HCT116 (cell line): ENCODE measurements at regions of chr9 and their contacts with region 1.

Region 1: DNA sequence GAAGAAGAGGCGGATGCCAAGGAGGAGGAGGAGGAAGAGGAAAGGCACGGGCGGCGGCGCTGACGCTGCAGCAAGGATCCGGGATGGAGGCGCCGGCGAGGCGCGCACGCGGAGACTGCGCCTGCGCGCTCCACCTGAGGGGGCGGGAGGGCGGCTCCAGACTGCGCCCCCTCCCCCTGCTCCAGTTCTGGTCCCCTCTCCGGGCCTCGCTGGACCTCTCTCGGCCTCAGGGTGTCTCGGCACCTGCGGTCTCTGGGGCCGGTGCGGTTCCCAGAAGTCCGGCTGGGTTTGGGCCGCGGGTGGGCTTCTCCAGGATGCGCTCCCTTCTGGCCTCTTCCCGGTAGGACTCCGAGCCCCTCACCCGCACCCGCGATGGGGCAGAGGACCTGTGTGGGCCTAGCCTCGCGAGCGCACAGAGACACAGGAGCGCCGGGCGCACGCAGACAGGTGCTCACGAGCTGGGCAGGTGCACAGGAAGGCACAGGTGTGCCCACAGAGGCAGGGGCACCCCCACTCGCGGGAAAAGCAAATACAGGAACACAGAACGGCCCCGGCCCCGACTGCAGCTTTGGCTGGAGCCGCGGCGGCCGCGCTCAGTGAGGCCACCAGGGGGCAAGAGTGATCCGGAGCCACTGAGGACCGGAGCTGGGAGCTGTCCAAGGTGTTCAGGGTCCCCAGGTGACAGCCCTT is at the start of gene NPDC1:
- DNase-seq: peak; percentile 68
- ATAC-seq: peak; percentile 73
- H3K4me3 ChIP-seq: peak within 1 kb of the TSS; percentile 55 to 90
- H3K27ac ChIP-seq: peak within 1 kb of the TSS; percentile 77
- H3K4me1 ChIP-seq: peaks cover 12 to 26% of the 10 kb centered on the region in 2 experiments
- H3K27me3 ChIP-seq: no peaks in the 10 kb centered on the region
- CTCF ChIP-seq: peak in 2 of 3 experiments; percentile 82 to 86; a peak in 4 of 6 replicates
- POLR2A ChIP-seq: no peak
- RAD21 ChIP-seq: no peak
- total RNA-seq, gene NPDC1: 98.8 TPM

Region 2: DNA sequence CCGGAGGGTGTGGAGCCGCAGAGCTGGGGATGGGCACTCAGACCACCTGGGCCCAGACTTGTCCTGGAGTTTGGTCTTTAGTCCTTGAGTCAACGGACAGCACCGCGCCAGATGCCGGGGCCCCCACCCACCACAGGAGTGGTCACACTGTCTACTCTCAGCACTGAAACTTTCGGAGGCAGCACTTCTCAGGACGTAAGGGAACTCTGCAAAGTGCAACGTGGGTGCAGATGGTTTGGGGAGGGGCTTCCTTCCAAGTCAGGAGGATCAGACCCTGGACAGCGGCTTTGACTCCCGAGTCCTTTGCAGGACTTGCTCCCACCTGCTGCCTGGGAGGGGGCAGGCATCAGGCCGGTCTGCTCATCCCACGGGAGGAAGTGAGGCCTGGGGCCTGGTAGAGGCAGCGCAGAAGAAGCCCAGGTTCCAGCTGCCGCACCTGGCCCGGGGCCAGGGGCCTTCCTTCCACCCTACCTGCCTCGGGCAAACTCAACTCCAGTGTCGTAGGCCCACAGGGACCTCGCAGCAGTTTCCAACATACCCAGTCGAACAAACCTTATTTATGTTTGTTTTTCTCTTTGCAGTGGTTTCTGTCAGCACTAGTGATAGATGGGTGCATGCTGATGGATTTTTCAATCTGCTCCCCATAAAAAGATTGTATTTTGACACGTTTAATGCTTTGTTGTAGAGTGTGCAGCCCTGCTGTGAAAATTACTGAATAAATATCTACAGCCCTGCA is 1716.5 kb before region 1 on chr9:
- CTCF ChIA-PET with region 1: no interaction called
- POLR2A ChIA-PET with region 1: no interaction called
- RAD21 ChIA-PET with region 1: no interaction called
- intact Hi-C with region 1: no loop called
- DNase-seq: no peak
- ATAC-seq: no peak
- H3K4me3 ChIP-seq: no peak overlapping the region
- H3K27ac ChIP-seq: no peak overlapping the region
- H3K4me1 ChIP-seq: peaks cover 0 to 5% of the 10 kb centered on the region in 2 experiments; a peak in 1 of 4 replicates
- H3K27me3 ChIP-seq: no peaks in the 10 kb centered on the region
- CTCF ChIP-seq: no peak
- POLR2A ChIP-seq: no peak
- RAD21 ChIP-seq: no peak

Region 3: DNA sequence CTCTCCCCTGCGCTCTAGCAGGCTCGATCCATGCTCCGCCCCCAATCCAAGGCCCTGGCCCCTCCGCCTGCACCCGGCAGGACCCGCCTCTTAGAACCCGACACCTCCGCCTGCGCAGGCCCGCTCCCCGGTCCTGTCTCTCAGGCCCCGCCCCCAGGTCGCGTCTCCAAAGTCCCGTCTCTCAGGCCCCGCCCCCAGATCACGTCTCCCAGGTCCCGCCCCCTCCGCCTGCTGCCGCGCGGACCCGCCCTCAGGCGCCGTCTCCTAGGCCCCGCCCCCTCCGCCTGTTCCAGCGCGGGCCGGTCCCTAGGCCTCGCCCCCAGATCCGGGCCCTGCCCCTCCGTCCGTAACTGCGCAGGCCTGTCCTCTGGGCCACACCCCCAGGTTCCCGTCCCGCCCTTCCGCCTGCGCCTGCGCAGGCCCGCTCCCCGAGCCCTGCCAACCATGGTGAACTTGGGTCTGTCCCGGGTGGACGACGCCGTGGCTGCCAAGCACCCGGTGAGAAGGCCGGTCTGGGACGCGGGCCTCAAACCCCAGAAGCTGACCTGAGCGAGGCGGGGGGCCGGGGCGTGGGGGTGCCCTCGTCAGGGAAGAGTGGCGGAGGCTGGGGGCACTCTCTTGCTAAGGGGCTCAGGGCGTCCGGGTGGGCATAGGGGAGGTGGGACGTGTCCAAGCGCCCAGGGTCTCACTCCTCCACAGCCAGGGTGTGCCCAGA is 255.2 kb before region 1 on chr9 and contains the start of gene TMEM141:
- CTCF ChIA-PET with region 1: interaction called, 4 read pairs
- POLR2A ChIA-PET with region 1: no interaction called
- RAD21 ChIA-PET with region 1: no interaction called
- intact Hi-C with region 1: loop called (anchors 1 kb)
- DNase-seq: peak; percentile 98
- ATAC-seq: peak; percentile 88
- H3K4me3 ChIP-seq: peak within 1 kb of the TSS; percentile 83 to 84
- H3K27ac ChIP-seq: peak within 1 kb of the TSS; percentile 79
- H3K4me1 ChIP-seq: peaks cover 14 to 40% of the 10 kb centered on the region in 2 experiments; a peak in 3 of 4 replicates
- H3K27me3 ChIP-seq: no peaks in the 10 kb centered on the region
- CTCF ChIP-seq: no peak
- POLR2A ChIP-seq: peak; percentile 46
- RAD21 ChIP-seq: no peak
- total RNA-seq, gene TMEM141: 73.6 TPM

Region 4: GRCh38 chr9:137029058-137029936 is 16.9 kb before region 1 on chr9:
- CTCF ChIA-PET with region 1: interaction called, 27 read pairs
- POLR2A ChIA-PET with region 1: no interaction called
- RAD21 ChIA-PET with region 1: interaction called, 4 to 5 read pairs
- intact Hi-C with region 1: no loop called
- DNase-seq: no peak
- ATAC-seq: peak; percentile 77
- H3K4me3 ChIP-seq: peak overlapping the region; percentile 56 to 70
- H3K27ac ChIP-seq: peak overlapping the region; percentile 85; the same call in 1 of the 2 replicates
- H3K4me1 ChIP-seq: peaks cover 32 to 49% of the 10 kb centered on the region in 2 experiments
- H3K27me3 ChIP-seq: no peaks in the 10 kb centered on the region
- CTCF ChIP-seq: peak in 2 of 3 experiments; percentile 87 to 97; a peak in 4 of 6 replicates
- POLR2A ChIP-seq: no peak
- RAD21 ChIP-seq: no peak

Region 5: GRCh38 chr9:137064027-137064879 is 18.0 kb after region 1 on chr9:
- CTCF ChIA-PET with region 1: interaction called, 57 read pairs
- POLR2A ChIA-PET with region 1: no interaction called
- RAD21 ChIA-PET with region 1: interaction called in 1 of 2 experiments, 3 read pairs
- intact Hi-C with region 1: loop called (anchors 1 kb)
- DNase-seq: no peak
- ATAC-seq: peak; percentile 49
- H3K4me3 ChIP-seq: no peak overlapping the region
- H3K27ac ChIP-seq: peak overlapping the region; percentile 30; the same call in 1 of the 2 replicates
- H3K4me1 ChIP-seq: peaks cover 13 to 30% of the 10 kb centered on the region in 2 experiments
- H3K27me3 ChIP-seq: no peaks in the 10 kb centered on the region
- CTCF ChIP-seq: peak in 2 of 3 experiments; percentile 89 to 96; a peak in 4 of 6 replicates
- POLR2A ChIP-seq: no peak
- RAD21 ChIP-seq: no peak

Region 6: DNA sequence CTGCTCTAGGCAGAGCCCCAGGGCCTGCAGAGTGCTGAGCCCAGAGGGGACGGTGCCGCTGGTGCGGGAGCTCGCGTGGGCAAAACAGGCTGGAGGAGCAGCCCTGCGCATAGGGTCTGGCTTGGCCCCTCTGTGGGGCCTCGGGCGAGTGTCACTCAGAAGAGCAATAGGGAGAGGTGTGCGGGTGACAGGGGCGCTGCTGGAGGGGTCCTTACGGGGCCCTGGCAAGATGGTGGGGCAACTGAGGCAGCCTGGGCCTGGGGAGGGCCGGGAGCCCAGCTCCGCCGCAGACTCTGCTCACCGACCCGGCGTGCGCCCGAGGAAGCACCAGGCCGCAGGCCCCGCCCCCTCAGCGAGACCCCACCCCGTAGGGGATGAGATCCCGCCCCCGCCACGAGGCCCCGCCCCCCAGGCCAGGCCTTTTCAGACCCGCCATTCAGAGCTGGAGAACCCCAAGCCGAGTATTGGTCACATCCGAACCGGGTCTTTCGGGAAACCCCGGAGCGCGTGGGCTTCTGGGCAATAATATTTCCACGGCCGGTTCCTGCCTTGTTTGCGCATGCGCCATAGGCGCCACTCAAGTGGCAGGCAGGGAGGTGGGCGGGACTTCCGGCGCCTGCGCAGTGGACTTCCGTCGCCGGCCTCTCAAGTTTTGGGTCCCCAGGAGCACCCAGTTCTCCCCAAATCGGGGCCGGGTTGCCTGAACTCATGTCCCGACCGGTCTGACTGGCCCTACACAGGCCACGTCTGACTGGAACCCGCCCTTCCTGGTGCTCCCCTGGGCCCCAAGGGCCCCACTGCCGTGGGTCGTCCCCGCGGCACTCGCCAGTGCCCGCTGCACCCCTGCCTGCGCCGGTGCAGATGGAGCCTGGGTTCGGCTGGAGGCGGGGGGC is 177.1 kb after region 1 on chr9:
- CTCF ChIA-PET with region 1: interaction called, 8 read pairs
- POLR2A ChIA-PET with region 1: no interaction called
- RAD21 ChIA-PET with region 1: interaction called in 1 of 2 experiments, 4 read pairs
- intact Hi-C with region 1: loop called (anchors 5 kb)
- DNase-seq: peak; percentile 97
- ATAC-seq: peak; percentile 69
- H3K4me3 ChIP-seq: peak overlapping the region; percentile 82 to 99
- H3K27ac ChIP-seq: peak overlapping the region; percentile 98
- H3K4me1 ChIP-seq: peaks cover 48 to 79% of the 10 kb centered on the region in 2 experiments
- H3K27me3 ChIP-seq: no peaks in the 10 kb centered on the region
- CTCF ChIP-seq: no peak
- POLR2A ChIP-seq: peak; percentile 58
- RAD21 ChIP-seq: no peak